ENCODE measurements at regions of chr1 and their contacts with region 1.

Region 1: GRCh38 chr1:109397538-109398342 is at the start of gene SORT1:
- DNase-seq: peak; percentile 53 to 78
- ATAC-seq: peak; percentile 97 to 99
- H3K4me3 ChIP-seq: peak within 1 kb of the TSS; percentile 86
- H3K27ac ChIP-seq: peak within 1 kb of the TSS; percentile 68 to 88
- H3K4me1 ChIP-seq: peaks cover 28% of the 10 kb centered on the region
- CTCF ChIP-seq: no peak
- EP300 ChIP-seq: no peak
- POLR2A ChIP-seq: peak; percentile 37; the same call in 1 of the 2 replicates
- RAD21 ChIP-seq: no peak
- polyA plus RNA-seq, gene SORT1: 13.8 and 14.7 TPM in 2 replicates

Region 2: DNA sequence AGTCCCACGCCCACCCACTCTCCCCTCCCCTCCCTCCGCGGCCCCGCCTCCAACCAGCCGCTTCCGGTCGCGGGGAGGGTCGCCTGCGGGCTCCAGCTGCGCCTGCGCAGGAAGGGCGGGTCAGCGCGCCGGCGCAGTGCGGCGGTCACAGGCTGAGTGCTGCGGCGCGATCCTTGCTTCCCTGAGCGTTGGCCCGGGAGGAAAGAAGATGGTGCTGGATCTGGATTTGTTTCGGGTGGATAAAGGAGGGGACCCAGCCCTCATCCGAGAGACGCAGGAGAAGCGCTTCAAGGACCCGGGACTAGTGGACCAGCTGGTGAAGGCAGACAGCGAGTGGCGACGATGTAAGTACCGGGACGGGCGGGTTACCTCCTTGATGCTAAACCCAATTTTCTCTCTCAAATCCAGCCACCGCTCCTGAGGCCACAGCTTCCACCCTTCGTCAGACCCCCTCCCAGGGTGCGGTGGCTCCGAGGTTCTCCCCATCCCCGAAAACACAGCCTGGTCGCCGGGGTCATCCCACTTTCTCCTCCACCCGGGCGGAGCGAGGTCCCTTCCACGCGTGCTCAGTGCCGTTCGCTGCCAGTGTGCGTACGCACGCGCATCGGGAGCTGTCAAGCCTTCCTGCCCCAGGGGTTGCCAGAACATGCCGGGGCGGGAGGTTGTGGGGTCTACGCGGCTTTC is 183.8 kb before region 1 on chr1 and contains the start of gene SARS1:
- CTCF ChIA-PET with region 1: interaction called, 10 read pairs
- POLR2A ChIA-PET with region 1: no interaction called
- DNase-seq: peak; percentile 79 to 81
- ATAC-seq: peak; percentile 90 to 95
- H3K4me3 ChIP-seq: peak within 1 kb of the TSS; percentile 82
- H3K27ac ChIP-seq: peak within 1 kb of the TSS; percentile 89 to 96
- H3K4me1 ChIP-seq: peaks cover 25% of the 10 kb centered on the region
- CTCF ChIP-seq: no peak
- EP300 ChIP-seq: no peak
- POLR2A ChIP-seq: peak; percentile 64
- RAD21 ChIP-seq: no peak
- polyA plus RNA-seq, gene SARS1: 152 and 158 TPM in 2 replicates

Region 3: GRCh38 chr1:109239580-109240095 is 158.1 kb before region 1 on chr1:
- CTCF ChIA-PET with region 1: interaction called, 13 read pairs
- POLR2A ChIA-PET with region 1: no interaction called
- DNase-seq: peak; percentile 53 to 55
- ATAC-seq: peak; percentile 79 to 90
- H3K4me3 ChIP-seq: no peak overlapping the region
- H3K27ac ChIP-seq: no peak overlapping the region
- H3K4me1 ChIP-seq: peaks cover 8% of the 10 kb centered on the region; the same call in 1 of the 3 replicates
- CTCF ChIP-seq: peak; percentile 34
- EP300 ChIP-seq: no peak
- POLR2A ChIP-seq: no peak
- RAD21 ChIP-seq: peak in 1 of 2 experiments; percentile 11; a peak in 1 of 5 replicates

Region 4: GRCh38 chr1:109253484-109254141 is 144.1 kb before region 1 on chr1:
- CTCF ChIA-PET with region 1: interaction called, 21 read pairs
- POLR2A ChIA-PET with region 1: interaction called, 3 read pairs
- DNase-seq: no peak
- ATAC-seq: no peak
- H3K4me3 ChIP-seq: no peak overlapping the region
- H3K27ac ChIP-seq: peak overlapping the region in 1 of 2 experiments; percentile 69; a peak in 3 of 6 replicates
- H3K4me1 ChIP-seq: peaks cover 20% of the 10 kb centered on the region
- CTCF ChIP-seq: no peak
- EP300 ChIP-seq: no peak
- POLR2A ChIP-seq: no peak
- RAD21 ChIP-seq: no peak

Region 5: GRCh38 chr1:109263597-109264398 is 133.9 kb before region 1 on chr1:
- CTCF ChIA-PET with region 1: interaction called, 69 read pairs
- POLR2A ChIA-PET with region 1: no interaction called
- DNase-seq: peak; percentile 85 to 95
- ATAC-seq: peak; percentile 92 to 99
- H3K4me3 ChIP-seq: no peak overlapping the region
- H3K27ac ChIP-seq: peak overlapping the region in 1 of 2 experiments; percentile 57; a peak in 2 of 6 replicates
- H3K4me1 ChIP-seq: no peaks in the 10 kb centered on the region; the same call in 2 of the 3 replicates
- CTCF ChIP-seq: peak; percentile 89
- EP300 ChIP-seq: no peak
- POLR2A ChIP-seq: no peak
- RAD21 ChIP-seq: peak; percentile 89 to 94

Region 6: GRCh38 chr1:109277434-109278204 is 120.1 kb before region 1 on chr1:
- CTCF ChIA-PET with region 1: interaction called, 107 read pairs
- POLR2A ChIA-PET with region 1: interaction called, 8 read pairs
- DNase-seq: peak; percentile 64 to 76
- ATAC-seq: peak; percentile 16 to 60; a peak in 3 of 6 replicates
- H3K4me3 ChIP-seq: no peak overlapping the region
- H3K27ac ChIP-seq: peak overlapping the region; percentile 95 to 99
- H3K4me1 ChIP-seq: peaks cover 57% of the 10 kb centered on the region
- CTCF ChIP-seq: peak; percentile 69
- EP300 ChIP-seq: no peak
- POLR2A ChIP-seq: no peak
- RAD21 ChIP-seq: peak; percentile 56 to 67

Region 7: GRCh38 chr1:109282952-109283747 is 114.6 kb before region 1 on chr1 and contains the start of gene PSRC1:
- CTCF ChIA-PET with region 1: interaction called, 107 read pairs
- POLR2A ChIA-PET with region 1: interaction called, 8 read pairs
- DNase-seq: peak; percentile 93 to 95
- ATAC-seq: peak; percentile 98 to 99
- H3K4me3 ChIP-seq: peak within 1 kb of the TSS; percentile 86
- H3K27ac ChIP-seq: peak within 1 kb of the TSS; percentile 85 to 98
- H3K4me1 ChIP-seq: peaks cover 13% of the 10 kb centered on the region; the same call in 2 of the 3 replicates
- CTCF ChIP-seq: no peak; the same call in 2 of the 3 replicates
- EP300 ChIP-seq: no peak
- POLR2A ChIP-seq: peak; percentile 85
- RAD21 ChIP-seq: 0 out of 5 replicates have a peak, but pooled peaks of 1 of the 2 experiments have one; percentile 17
- polyA plus RNA-seq, gene PSRC1: 13.7 and 15.3 TPM in 2 replicates

Region 8: GRCh38 chr1:109432336-109432735 is 34.6 kb after region 1 on chr1:
- CTCF ChIA-PET with region 1: no interaction called
- POLR2A ChIA-PET with region 1: no interaction called
- DNase-seq: no peak
- ATAC-seq: no peak
- H3K4me3 ChIP-seq: no peak overlapping the region
- H3K27ac ChIP-seq: no peak overlapping the region
- H3K4me1 ChIP-seq: peaks cover 4% of the 10 kb centered on the region; the same call in 1 of the 3 replicates
- CTCF ChIP-seq: no peak
- EP300 ChIP-seq: no peak
- POLR2A ChIP-seq: no peak
- RAD21 ChIP-seq: no peak

Region 9: GRCh38 chr1:109483672-109484518 is 86.2 kb after region 1 on chr1 and contains the start of gene ATXN7L2:
- CTCF ChIA-PET with region 1: no interaction called
- POLR2A ChIA-PET with region 1: no interaction called
- DNase-seq: peak; percentile 85 to 92
- ATAC-seq: peak; percentile 80 to 82
- H3K4me3 ChIP-seq: peak within 1 kb of the TSS; percentile 60
- H3K27ac ChIP-seq: peak within 1 kb of the TSS; percentile 96 to 99
- H3K4me1 ChIP-seq: peaks cover 6% of the 10 kb centered on the region; the same call in 2 of the 3 replicates
- CTCF ChIP-seq: no peak
- EP300 ChIP-seq: no peak
- POLR2A ChIP-seq: peak; percentile 92
- RAD21 ChIP-seq: no peak
- polyA plus RNA-seq, gene ATXN7L2: 0.97 and 1.2 TPM in 2 replicates

Region 10: DNA sequence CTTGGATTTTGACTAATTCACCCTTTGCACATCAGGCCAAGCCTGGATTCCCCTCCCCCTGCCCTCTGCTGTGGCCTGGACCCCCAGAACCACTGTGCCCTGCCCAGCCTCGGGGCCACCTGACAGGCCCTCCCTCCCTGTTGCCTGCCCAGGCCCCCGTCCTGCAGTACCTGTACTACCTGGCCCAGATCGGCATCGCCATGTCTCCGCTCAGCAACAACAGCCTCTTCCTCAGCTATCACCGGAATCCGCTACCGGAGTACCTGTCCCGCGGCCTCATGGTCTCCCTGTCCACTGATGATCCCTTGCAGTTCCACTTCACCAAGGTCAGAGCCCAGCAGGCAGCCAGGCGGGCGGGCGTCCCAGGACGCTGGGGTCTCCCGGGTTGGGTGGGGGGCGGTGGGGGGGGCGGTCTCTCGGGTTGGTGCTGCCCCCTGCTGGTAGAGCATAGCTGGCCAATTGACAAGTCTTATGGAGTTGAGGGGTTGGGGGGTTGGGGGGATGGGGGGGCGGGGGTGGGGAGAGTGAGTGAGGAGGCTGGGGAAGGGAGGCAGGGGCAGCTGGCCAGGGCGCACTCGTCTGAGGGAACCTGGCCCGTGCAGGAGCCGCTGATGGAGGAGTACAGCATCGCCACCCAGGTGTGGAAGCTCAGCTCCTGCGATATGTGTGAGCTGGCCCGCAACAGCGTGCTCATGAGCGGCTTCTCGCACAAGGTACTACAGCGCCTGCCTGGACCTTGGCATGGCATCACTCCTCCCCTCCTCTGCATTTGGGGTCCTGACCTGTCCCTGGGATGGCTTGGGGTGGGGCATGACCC is 232.5 kb after region 1 on chr1:
- CTCF ChIA-PET with region 1: no interaction called
- POLR2A ChIA-PET with region 1: no interaction called
- DNase-seq: no peak
- ATAC-seq: peak in 1 of 2 experiments; percentile 10; a peak in 2 of 6 replicates
- H3K4me3 ChIP-seq: no peak overlapping the region
- H3K27ac ChIP-seq: no peak overlapping the region
- H3K4me1 ChIP-seq: peaks cover 16% of the 10 kb centered on the region
- CTCF ChIP-seq: peak; percentile 31; the same call in 1 of the 3 replicates
- EP300 ChIP-seq: no peak
- POLR2A ChIP-seq: no peak
- RAD21 ChIP-seq: no peak; a peak in 2 of 5 replicates

Measured in A549 (cell line).